Psoas muscle (tissue), 8 donors: ENCODE measurements at regions of chr9 and their contacts with region 1.

Region 1: GRCh38 chr9:94860968-94861871 is 134.7 kb downstream of the AOPEP start:
- DNase-seq: no peak
- ATAC-seq: peak; percentile 28 to 42 (median 37)
- H3K4me3 ChIP-seq: no peak overlapping the region
- H3K27ac ChIP-seq: peak overlapping the region; percentile 77
- H3K4me1 ChIP-seq: peaks cover 37% of the 10 kb centered on the region
- H3K27me3 ChIP-seq: no peaks in the 10 kb centered on the region
- CTCF ChIP-seq: no peak

Region 2: GRCh38 chr9:94076557-94076956 is 784.7 kb before region 1 on chr9:
- intact Hi-C with region 1: no loop called
- DNase-seq: no peak
- ATAC-seq: no peak
- H3K4me3 ChIP-seq: no peak overlapping the region
- H3K27ac ChIP-seq: no peak overlapping the region
- H3K4me1 ChIP-seq: no peaks in the 10 kb centered on the region
- H3K27me3 ChIP-seq: no peaks in the 10 kb centered on the region
- CTCF ChIP-seq: no peak

Region 3: DNA sequence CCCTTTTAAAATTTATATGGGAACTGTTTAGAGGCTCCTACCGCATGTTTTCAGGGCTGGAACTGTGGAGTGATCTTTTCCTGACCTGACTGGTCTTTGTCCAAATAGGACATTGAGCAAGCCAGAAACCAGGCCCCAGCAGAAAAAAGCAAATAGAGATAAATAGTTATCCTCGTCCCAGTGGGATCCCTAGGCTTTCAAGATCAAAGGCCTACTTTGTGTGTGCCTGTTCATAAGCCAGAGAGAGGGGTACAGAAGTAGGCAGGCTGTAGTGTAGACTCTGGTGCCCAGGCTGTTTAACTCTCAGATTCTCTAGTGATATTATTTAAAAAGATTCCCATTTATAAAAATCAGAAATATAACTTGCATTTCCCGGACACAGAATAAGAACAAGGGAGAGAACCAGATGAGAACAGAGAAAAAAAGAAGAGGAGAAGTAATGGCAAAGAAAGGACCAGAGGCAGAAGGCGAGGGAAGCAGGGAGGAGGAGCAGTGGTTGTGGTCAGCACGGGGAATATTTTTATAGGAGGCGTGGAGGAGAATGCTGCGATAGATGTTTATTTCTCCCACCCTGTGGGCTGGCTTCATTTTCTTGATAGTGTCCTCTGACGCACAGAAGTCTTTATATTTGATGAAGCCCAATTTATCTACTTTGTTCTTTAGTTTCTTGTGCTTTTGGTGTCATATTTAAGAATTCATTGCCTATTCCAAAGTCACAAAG is 33.5 kb before region 1 on chr9:
- intact Hi-C with region 1: loop called in 1 of 2 experiments (anchors 5 kb)
- DNase-seq: no peak
- ATAC-seq: peak in 3 of 4 donors; percentile 15 to 51 (median 21)
- H3K4me3 ChIP-seq: no peak overlapping the region
- H3K27ac ChIP-seq: peak overlapping the region; percentile 48
- H3K4me1 ChIP-seq: peaks cover 34% of the 10 kb centered on the region
- H3K27me3 ChIP-seq: no peaks in the 10 kb centered on the region
- CTCF ChIP-seq: no peak

Region 4: DNA sequence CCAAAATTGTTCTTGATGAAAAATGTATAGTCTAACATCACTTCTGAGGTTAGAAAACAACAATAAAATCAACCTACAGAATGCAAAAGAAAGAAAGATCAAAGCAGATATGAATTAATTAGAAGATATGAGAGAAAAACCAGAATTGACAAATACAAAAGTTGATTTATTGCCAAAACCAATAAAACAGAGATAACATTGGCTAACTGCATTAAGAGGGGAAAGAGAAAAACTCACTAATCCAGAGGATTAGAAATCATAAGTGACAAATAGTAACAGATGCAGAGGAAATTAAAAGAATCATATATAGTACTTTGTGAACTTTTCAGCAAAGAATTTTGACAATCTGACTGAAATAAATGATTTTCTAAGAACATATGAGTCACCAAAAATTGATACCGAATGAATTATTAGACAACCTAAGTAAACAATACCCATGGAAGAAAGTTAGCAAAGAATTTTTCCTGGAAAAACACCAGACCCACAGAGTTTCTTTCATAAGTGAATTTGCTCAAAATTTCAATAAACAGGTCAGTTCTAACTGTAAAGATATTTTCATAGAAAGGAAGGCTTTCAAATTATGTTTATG is 33.0 kb after region 1 on chr9:
- intact Hi-C with region 1: no loop called
- DNase-seq: no peak
- ATAC-seq: no peak
- H3K4me3 ChIP-seq: no peak overlapping the region
- H3K27ac ChIP-seq: no peak overlapping the region
- H3K4me1 ChIP-seq: no peaks in the 10 kb centered on the region
- H3K27me3 ChIP-seq: no peaks in the 10 kb centered on the region
- CTCF ChIP-seq: no peak